Activated CD4-positive, alpha-beta memory T cell treated with anti-CD3 and anti-CD28 coated beads, Interleukin-2, amount 10 ng/mL, durations not matched to agents 7 days and 5 days (primary cell): ENCODE measurements at regions of chr6 and their contacts with region 1.

Region 1: DNA sequence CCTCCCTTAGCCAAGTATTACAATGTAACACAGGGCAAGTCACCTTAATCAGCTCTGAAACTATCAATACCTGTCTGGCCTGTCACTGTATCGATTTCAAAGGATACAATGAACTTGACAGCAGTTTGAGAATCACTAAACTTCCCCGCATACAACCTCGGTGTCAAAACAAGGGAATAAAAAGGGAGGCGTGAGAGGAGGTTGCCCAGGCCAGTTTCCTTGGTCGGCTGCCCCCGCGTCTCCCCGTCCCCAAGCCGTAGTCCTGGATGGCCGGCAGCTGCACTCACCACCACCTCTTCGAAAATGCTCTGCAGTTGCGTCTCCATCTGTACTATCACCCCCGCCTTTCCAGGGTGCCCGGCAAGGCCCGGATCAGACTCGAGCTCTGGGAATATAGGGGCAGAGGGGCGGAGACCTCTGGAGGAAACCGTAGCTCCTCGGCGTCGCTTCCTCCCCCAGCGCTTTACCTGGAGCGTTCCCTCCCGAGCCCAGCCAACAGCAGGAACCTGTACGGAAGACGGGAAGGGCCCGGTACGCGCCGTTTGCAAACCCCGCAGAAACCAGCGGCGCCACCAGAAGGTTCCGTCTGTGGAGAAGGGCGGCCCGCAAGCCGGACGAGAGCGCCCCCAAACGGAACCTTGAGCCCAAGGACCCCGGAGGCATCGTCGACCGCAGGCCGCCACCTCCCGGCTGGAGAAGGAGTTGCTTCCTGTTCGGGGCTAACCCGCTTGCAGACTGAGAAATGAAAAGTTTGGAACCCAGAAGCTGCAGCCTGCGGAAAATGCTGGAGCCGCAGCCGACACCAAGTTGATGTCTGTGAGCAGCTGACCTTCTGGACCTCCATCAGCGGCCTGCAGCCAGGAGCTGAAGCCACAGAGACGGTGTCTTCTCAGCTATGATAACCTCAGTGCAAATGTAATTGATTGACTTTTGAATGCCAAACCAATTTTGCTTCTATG is at the start of gene MED23:
- DNase-seq: peak; percentile 95
- H3K4me3 Mint-ChIP-seq: peak within 1 kb of the TSS; percentile 90
- H3K27ac Mint-ChIP-seq: peak within 1 kb of the TSS; percentile 86
- H3K4me1 Mint-ChIP-seq: peaks cover 22% of the 10 kb centered on the region
- H3K27me3 Mint-ChIP-seq: no peaks in the 10 kb centered on the region
- total RNA-seq, gene MED23: 32.1 to 33.1 TPM

Region 2: DNA sequence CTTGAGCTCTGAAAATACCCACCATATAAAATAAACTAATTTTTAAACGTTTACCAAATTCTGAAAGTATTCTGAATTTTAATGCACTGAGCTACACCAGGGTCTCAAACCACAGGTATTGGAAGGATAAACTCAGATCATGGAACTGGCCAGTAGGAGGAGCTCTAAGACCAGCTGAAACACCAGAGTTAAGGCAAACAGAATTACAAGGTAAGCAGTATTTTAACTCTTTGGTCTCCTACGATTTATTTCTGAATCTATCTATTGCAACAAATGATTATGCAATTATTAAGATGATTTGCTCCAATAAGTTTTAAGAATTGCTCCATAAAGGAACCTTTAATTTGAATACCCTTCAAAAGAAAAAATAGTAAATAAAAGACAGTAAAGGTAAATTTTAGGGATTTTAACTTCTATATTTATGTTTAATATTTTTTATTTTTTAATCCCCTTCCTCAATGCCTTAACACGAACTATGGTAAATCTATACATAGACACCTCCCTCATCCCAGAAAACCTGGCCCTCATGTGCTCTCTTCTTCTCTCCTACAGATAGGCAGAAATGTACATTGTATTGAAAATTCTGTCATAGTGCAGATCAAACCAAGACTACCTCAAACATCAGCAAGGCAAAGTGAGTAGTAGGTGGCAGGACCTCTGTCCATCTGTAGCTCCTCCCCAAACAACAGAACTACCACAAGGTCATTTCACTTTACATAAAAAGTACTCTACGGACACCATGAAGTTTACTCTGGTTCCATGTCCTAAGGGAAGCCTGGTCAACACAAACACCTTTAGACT is 742.4 kb before region 1 on chr6:
- CTCF ChIA-PET with region 1: interaction called, 20 read pairs
- POLR2A ChIA-PET with region 1: no interaction called
- DNase-seq: peak; percentile 72
- H3K4me3 Mint-ChIP-seq: no peak overlapping the region
- H3K27ac Mint-ChIP-seq: no peak overlapping the region
- H3K4me1 Mint-ChIP-seq: no peaks in the 10 kb centered on the region
- H3K27me3 Mint-ChIP-seq: no peaks in the 10 kb centered on the region

Region 3: DNA sequence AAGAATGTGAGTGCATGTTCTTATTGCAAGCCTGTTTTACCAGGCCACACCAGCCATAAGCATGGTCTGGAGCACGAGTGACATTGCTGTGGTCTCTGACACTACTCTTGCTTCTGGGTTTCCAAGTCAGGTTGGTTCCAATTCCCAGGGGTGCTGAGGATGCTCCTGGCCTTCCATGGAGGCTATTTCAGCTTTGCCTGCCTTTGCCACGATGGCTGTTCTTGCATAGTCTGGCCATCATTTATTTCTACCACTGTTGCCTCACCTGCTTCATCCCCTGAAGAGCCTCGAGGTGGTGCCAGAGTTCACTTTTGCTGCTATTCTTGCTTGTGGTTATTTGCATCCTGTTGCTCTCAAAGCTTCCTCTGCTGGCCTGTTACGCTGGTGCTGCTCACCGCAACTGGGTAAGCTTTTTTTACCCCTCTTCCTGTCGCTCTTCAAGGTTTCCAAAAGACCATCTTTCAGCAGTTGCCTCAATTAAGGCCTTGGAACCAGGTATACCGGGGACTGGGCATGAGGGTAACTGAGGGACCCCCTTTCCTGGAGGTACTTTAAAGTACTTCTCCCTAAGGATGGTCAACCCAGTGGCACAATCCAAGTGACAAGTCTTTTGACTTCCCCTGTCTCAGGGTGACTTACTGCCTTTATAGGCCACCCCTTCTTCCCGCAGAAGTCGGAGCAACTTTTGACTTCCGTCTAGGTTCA is 428.3 kb before region 1 on chr6:
- CTCF ChIA-PET with region 1: interaction called, 13 read pairs
- POLR2A ChIA-PET with region 1: interaction called, 22 read pairs
- DNase-seq: peak; percentile 84
- H3K4me3 Mint-ChIP-seq: peak overlapping the region; percentile 75
- H3K27ac Mint-ChIP-seq: peak overlapping the region; percentile 94
- H3K4me1 Mint-ChIP-seq: peaks cover 54% of the 10 kb centered on the region
- H3K27me3 Mint-ChIP-seq: no peaks in the 10 kb centered on the region

Region 4: GRCh38 chr6:131602781-131603312 is 25.2 kb before region 1 on chr6:
- CTCF ChIA-PET with region 1: interaction called, 12 read pairs
- POLR2A ChIA-PET with region 1: interaction called, 4 read pairs
- DNase-seq: no peak
- H3K4me3 Mint-ChIP-seq: no peak overlapping the region
- H3K27ac Mint-ChIP-seq: no peak overlapping the region
- H3K4me1 Mint-ChIP-seq: no peaks in the 10 kb centered on the region
- H3K27me3 Mint-ChIP-seq: no peaks in the 10 kb centered on the region

Region 5: DNA sequence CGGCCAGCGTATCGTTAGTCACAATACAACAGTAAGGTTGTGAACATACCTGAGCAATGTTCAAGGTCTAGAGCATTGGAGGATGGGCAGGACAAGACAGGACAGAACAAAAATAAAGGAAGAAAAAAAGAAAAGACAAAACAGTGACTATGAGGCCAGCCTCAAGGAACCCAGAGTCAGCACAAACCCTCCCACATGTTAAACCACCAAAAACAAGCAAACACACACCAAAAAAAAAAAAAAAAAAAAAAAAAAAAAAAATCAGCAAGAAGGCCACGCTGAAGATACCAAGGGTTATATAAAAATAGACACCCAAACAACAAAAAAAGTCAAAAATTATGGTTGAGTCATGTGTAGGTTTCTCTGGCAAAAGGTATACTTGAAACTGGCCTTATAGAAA is 12.7 kb before region 1 on chr6:
- CTCF ChIA-PET with region 1: interaction called, 29 read pairs
- POLR2A ChIA-PET with region 1: interaction called, 11 read pairs
- DNase-seq: no peak
- H3K4me3 Mint-ChIP-seq: no peak overlapping the region
- H3K27ac Mint-ChIP-seq: no peak overlapping the region
- H3K4me1 Mint-ChIP-seq: peaks cover 5% of the 10 kb centered on the region
- H3K27me3 Mint-ChIP-seq: no peaks in the 10 kb centered on the region

Region 6: GRCh38 chr6:131660195-131660594 is 32.2 kb after region 1 on chr6:
- CTCF ChIA-PET with region 1: interaction called, 11 read pairs
- POLR2A ChIA-PET with region 1: no interaction called
- DNase-seq: no peak
- H3K4me3 Mint-ChIP-seq: no peak overlapping the region
- H3K27ac Mint-ChIP-seq: no peak overlapping the region
- H3K4me1 Mint-ChIP-seq: peaks cover 5% of the 10 kb centered on the region
- H3K27me3 Mint-ChIP-seq: no peaks in the 10 kb centered on the region